ENCODE measurements at regions of chr11 and their contacts with region 1.

Region 1: DNA sequence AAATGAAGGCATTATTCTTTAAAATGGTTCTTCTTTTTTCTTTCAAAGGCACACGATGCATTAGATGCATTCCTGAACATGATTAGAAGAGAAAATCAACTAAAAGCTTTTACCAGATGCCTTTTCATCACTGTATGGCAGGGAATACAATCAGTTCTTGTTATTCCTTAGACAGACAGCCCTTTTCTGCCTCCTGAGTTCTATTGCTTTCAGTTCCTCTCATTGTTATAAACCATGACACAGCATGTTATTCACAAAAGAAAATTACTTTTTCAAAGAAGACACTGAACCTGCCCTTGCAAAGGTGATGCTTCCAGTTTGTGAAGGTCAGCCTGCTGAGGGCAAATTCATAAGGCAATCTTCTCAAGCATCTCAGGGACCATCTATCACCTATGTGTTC is 70.1 kb downstream of the FAM181B start:
- DNase-seq: no peak
- ATAC-seq: no peak
- H3K4me3 ChIP-seq: no peak overlapping the region
- H3K27ac ChIP-seq: no peak overlapping the region
- H3K4me1 ChIP-seq: no peaks in the 10 kb centered on the region
- H3K27me3 ChIP-seq: no peaks in the 10 kb centered on the region
- CTCF ChIP-seq: no peak

Region 2: DNA sequence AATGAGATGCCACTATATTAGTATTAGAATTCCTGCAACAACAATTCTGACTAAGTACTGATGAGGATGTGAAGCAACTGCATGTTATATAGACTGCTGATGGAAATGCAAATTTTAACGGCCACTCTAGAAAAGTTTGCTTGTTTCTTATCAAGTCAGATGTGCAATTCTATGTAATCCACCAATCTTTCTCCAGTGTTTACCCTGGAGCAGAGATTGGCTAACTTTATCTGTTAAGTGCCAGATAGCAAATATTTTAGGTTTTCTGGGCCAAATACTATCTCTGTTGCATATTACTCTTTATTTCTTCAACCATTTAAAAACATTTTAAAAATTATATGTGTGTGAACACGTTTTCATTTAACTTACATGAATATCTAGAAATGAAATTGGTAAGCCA is 516.7 kb before region 1 on chr11:
- intact Hi-C with region 1: loop called in 1 of 2 experiments (anchors 5 kb)
- DNase-seq: no peak
- ATAC-seq: no peak
- H3K4me3 ChIP-seq: no peak overlapping the region
- H3K27ac ChIP-seq: no peak overlapping the region
- H3K4me1 ChIP-seq: no peaks in the 10 kb centered on the region
- H3K27me3 ChIP-seq: no peaks in the 10 kb centered on the region
- CTCF ChIP-seq: no peak

Region 3: DNA sequence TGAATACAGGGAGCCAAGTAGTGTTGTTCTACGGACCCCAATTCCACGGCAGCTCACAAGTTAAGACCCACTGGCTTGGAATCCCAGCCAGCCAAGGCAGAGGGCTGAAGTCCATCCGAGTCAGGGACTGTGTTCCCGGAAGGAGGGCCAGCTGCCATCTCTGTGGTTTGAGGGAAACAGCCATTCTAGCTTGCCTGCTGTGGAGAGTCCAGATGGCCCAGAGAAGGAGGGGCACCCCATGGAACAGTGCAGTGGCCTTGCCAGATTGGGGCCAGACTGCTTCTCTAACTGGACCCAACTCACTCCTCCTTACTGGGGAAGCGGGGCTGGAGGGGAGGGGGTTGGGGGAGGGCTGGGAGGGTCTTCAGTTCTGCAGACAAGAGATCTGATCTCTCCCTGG is 86.3 kb before region 1 on chr11:
- intact Hi-C with region 1: no loop called
- DNase-seq: no peak
- ATAC-seq: no peak
- H3K4me3 ChIP-seq: no peak overlapping the region
- H3K27ac ChIP-seq: no peak overlapping the region
- H3K4me1 ChIP-seq: no peaks in the 10 kb centered on the region
- H3K27me3 ChIP-seq: no peaks in the 10 kb centered on the region
- CTCF ChIP-seq: no peak